PC-9 (cell line): ENCODE measurements at regions of chr11 and their contacts with region 1.

Region 1: GRCh38 chr11:38332046-38332445 is 1734.0 kb upstream of the RAG2 start:
- DNase-seq: no peak
- H3K4me3 ChIP-seq: no peak overlapping the region
- H3K27ac ChIP-seq: no peak overlapping the region
- H3K4me1 ChIP-seq: peaks cover 7% of the 10 kb centered on the region
- H3K27me3 ChIP-seq: no peaks in the 10 kb centered on the region
- CTCF ChIP-seq: no peak

Region 2: GRCh38 chr11:38252620-38253019 is 79.4 kb before region 1 on chr11:
- CTCF ChIA-PET with region 1: no interaction called
- POLR2A ChIA-PET with region 1: no interaction called
- intact Hi-C with region 1: no loop called
- DNase-seq: no peak
- H3K4me3 ChIP-seq: no peak overlapping the region
- H3K27ac ChIP-seq: no peak overlapping the region
- H3K4me1 ChIP-seq: no peaks in the 10 kb centered on the region
- H3K27me3 ChIP-seq: no peaks in the 10 kb centered on the region
- CTCF ChIP-seq: no peak

Region 3: GRCh38 chr11:38345289-38345804 is 13.3 kb after region 1 on chr11:
- CTCF ChIA-PET with region 1: no interaction called
- POLR2A ChIA-PET with region 1: interaction called, 25 read pairs
- intact Hi-C with region 1: no loop called
- DNase-seq: peak in 1 of 2 experiments; percentile 86
- H3K4me3 ChIP-seq: no peak overlapping the region
- H3K27ac ChIP-seq: peak overlapping the region; percentile 58
- H3K4me1 ChIP-seq: peaks cover 13% of the 10 kb centered on the region
- H3K27me3 ChIP-seq: no peaks in the 10 kb centered on the region
- CTCF ChIP-seq: no peak